Spleen (tissue), 13 donors: ENCODE measurements at regions of chr5 and their contacts with region 1.

Region 1: GRCh38 chr5:77491783-77492652 is at the start of gene WDR41:
- DNase-seq: peak; percentile 98
- H3K4me3 ChIP-seq: peak within 1 kb of the TSS; percentile 59 to 86 (median 73)
- H3K27ac ChIP-seq: peak within 1 kb of the TSS; percentile 93 to 99 (median 96)
- H3K4me1 ChIP-seq: peaks cover 0 to 33% (median 17%) of the 10 kb centered on the region in 6 donors
- H3K27me3 ChIP-seq: no peaks in the 10 kb centered on the region
- CTCF ChIP-seq: peak; percentile 77 to 98 (median 94)
- POLR2A ChIP-seq: no peak
- total RNA-seq, gene WDR41: 33.0 to 54.0 (median 37.2) TPM

Region 2: DNA sequence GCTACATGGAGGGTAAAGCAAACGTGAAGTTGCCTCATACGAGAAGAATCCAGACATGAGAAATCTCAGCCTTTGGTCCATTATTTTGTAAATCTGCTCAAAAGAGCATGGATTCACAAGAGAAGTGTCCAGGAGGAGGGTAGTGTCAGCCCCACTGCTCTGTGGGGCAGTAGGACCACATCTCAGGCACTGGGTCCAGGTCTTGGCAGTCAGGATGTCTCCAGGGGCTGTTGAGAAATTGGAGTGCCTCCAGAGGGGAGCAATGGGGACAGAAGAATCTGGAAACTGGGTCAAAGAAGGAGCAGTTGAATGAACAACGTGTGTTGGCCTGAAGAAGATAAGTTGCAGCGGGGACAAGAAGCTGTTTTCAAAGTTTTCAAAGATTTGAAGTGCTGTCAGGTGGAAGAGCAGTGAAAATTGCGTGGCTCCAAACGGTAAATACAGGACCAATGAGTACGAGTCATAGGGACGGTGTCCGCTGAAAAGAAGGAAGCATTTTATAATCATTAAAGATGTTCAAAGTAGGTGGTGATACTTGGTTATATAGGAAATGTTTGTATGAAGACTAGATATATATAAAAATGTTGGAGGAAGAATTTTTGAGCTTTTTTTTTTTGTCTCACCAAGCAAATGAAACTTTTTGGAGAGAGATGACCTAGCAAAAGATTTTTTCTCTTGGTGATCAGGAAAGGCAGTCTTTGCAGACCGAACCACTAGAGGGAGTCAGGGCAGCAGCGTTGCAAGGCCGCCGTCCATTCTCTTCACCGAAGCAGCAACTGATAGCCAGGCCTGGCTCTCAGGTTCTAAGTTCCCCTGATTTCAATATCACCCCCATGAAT is 347.8 kb before region 1 on chr5:
- intact Hi-C with region 1: loop called (anchors 5 kb)
- DNase-seq: peak; percentile 82
- H3K4me3 ChIP-seq: no peak overlapping the region
- H3K27ac ChIP-seq: no peak overlapping the region
- H3K4me1 ChIP-seq: peaks cover 0 to 4% (median 0%) of the 10 kb centered on the region in 6 donors
- H3K27me3 ChIP-seq: no peaks in the 10 kb centered on the region
- CTCF ChIP-seq: peak; percentile 12 to 85 (median 68)
- POLR2A ChIP-seq: no peak

Region 3: GRCh38 chr5:78009937-78010527 is 518.0 kb after region 1 on chr5:
- intact Hi-C with region 1: no loop called
- DNase-seq: no peak
- H3K4me3 ChIP-seq: no peak overlapping the region
- H3K27ac ChIP-seq: no peak overlapping the region
- H3K4me1 ChIP-seq: no peaks in the 10 kb centered on the region
- H3K27me3 ChIP-seq: no peaks in the 10 kb centered on the region
- CTCF ChIP-seq: no peak
- POLR2A ChIP-seq: no peak